ENCODE measurements at regions of chr10 and their contacts with region 1.

Region 1: DNA sequence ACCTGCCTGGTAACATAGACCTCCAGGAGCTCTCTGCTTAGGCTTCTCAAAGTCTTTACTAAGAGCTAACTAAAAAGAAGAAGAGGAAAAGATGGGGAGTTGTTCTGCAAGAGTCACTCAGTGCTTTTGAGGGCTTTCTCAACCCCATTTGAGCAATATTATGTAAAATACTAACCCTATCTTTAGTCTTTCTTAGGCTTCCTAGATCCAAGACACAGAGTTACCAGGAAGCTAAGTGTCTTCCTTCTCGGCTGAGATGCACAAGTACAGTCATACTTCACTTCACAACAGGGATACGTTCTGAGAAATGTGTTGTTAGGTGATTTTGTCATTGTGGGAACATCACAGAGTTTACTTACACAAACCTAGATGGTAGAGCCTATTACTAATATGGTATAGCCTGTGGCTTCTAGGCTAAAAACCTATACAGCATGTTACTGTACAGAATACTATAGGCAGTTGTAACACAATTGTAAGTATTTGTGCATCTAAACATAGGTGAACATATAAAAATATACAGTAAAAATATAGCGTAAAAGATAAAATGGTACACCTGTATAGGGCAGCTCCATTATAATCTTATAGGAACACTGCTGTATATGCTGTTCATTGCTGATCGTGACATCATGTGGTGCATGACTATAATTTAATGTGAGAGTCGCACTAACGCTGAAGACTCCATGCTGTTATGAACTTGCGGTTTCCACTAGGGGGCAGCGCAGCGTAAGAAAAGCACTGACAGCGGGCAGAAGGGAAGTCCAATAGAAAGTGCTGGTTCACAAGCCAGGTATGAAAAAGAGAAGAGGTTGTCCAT is 16.3 kb downstream of the ANKRD22 start:
- DNase-seq: peak; percentile 81 to 91 (median 84)
- ATAC-seq: peak; percentile 81 to 97 (median 95)
- H3K4me3 ChIP-seq: no peak overlapping the region
- H3K27ac ChIP-seq: peak overlapping the region in 1 of 12 donors; percentile 2
- H3K4me1 ChIP-seq: peaks cover 0 to 31% (median 0%) of the 10 kb centered on the region in 12 donors
- H3K27me3 ChIP-seq: no peaks in the 10 kb centered on the region
- CTCF ChIP-seq: peak; percentile 79 to 95 (median 86)
- POLR2A ChIP-seq: no peak

Region 2: GRCh38 chr10:88880282-88881076 is 45.2 kb after region 1 on chr10:
- intact Hi-C with region 1: loop called in 6 of 10 experiments (anchors 2 to 5 kb)
- DNase-seq: peak; percentile 82 to 92 (median 87)
- ATAC-seq: peak; percentile 91 to 99 (median 97)
- H3K4me3 ChIP-seq: peak overlapping the region; percentile 53 to 86 (median 72)
- H3K27ac ChIP-seq: peak overlapping the region; percentile 78 to 98 (median 90)
- H3K4me1 ChIP-seq: peaks cover 0 to 51% (median 9%) of the 10 kb centered on the region in 12 donors
- H3K27me3 ChIP-seq: no peaks in the 10 kb centered on the region
- CTCF ChIP-seq: peak in 7 of 12 donors; percentile 7 to 56 (median 42)
- POLR2A ChIP-seq: peak in 1 of 2 donors; percentile 35

Region 3: GRCh38 chr10:88926566-88927415 is 91.5 kb after region 1 on chr10:
- intact Hi-C with region 1: loop called in 1 of 10 experiments (anchors 2 kb)
- DNase-seq: no peak
- ATAC-seq: peak; percentile 48 to 84 (median 78)
- H3K4me3 ChIP-seq: peak overlapping the region in 6 of 12 donors; percentile 7 to 23 (median 8)
- H3K27ac ChIP-seq: peak overlapping the region in 11 of 12 donors; percentile 45 to 83 (median 73)
- H3K4me1 ChIP-seq: peaks cover 0 to 45% (median 17%) of the 10 kb centered on the region in 12 donors
- H3K27me3 ChIP-seq: no peaks in the 10 kb centered on the region
- CTCF ChIP-seq: no peak
- POLR2A ChIP-seq: no peak

Region 4: DNA sequence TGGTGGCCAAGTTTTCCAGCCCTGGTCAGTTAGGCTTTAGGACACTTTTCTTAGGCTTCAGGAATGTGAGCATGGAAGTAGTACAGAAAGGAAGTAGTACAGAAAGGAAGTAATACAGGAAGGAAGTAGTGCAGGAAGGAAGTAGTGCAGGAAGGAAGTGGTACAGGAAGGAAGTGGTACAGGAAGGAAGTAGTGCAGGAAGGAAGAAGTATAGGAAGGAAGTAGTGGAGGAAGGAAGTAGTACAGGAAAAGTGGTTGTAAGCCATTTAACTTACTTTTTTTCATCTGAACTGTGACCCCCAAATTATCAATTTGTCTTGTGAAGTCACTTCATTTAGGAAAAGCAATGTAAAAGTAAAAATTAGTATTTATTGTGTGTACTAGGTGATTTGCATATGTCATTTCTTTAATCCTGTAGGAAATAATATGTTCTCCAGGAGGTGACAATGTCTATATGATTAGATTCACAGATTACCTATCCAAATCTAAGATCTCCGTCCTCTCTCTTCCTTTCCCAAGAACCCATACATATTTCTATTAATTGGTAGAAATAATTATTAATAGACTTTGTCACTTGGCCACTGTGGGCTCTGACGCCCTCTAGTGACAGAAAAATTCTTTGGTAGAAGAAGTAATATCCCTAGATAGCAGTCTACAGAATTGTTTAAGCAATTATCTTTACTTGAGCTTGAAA is 151.4 kb after region 1 on chr10:
- intact Hi-C with region 1: loop called in 8 of 10 experiments (anchors 1 to 5 kb)
- DNase-seq: no peak
- ATAC-seq: no peak
- H3K4me3 ChIP-seq: no peak overlapping the region
- H3K27ac ChIP-seq: peak overlapping the region in 2 of 12 donors; percentile 43 to 95
- H3K4me1 ChIP-seq: peaks cover 0 to 67% (median 20%) of the 10 kb centered on the region in 12 donors
- H3K27me3 ChIP-seq: no peaks in the 10 kb centered on the region
- CTCF ChIP-seq: peak; percentile 74 to 93 (median 84)
- POLR2A ChIP-seq: no peak

Region 5: GRCh38 chr10:89217057-89217990 is 382.0 kb after region 1 on chr10:
- intact Hi-C with region 1: loop called in 9 of 10 experiments (anchors 5 kb)
- DNase-seq: peak in 3 of 5 donors; percentile 40 to 58 (median 47)
- ATAC-seq: peak in 2 of 4 donors; percentile 25 to 55
- H3K4me3 ChIP-seq: no peak overlapping the region
- H3K27ac ChIP-seq: peak overlapping the region in 10 of 12 donors; percentile 6 to 64 (median 34)
- H3K4me1 ChIP-seq: peaks cover 0 to 19% (median 7%) of the 10 kb centered on the region in 12 donors
- H3K27me3 ChIP-seq: no peaks in the 10 kb centered on the region
- CTCF ChIP-seq: peak; percentile 71 to 87 (median 81)
- POLR2A ChIP-seq: no peak

Region 6: GRCh38 chr10:89224739-89225443 is 389.6 kb after region 1 on chr10:
- intact Hi-C with region 1: loop called in 1 of 10 experiments (anchors 5 kb)
- DNase-seq: peak; percentile 45 to 72 (median 55)
- ATAC-seq: peak; percentile 60 to 85 (median 63)
- H3K4me3 ChIP-seq: peak overlapping the region in 8 of 12 donors; percentile 11 to 42 (median 33)
- H3K27ac ChIP-seq: peak overlapping the region; percentile 56 to 89 (median 78)
- H3K4me1 ChIP-seq: peaks cover 0 to 15% (median 0%) of the 10 kb centered on the region in 12 donors
- H3K27me3 ChIP-seq: no peaks in the 10 kb centered on the region
- CTCF ChIP-seq: peak in 10 of 12 donors; percentile 17 to 70 (median 36)
- POLR2A ChIP-seq: no peak

Measured in heart left ventricle (tissue), 16 donors.